Sigmoid colon (tissue), 7 donors: ENCODE measurements at regions of chr12 and their contacts with region 1.

Region 1: DNA sequence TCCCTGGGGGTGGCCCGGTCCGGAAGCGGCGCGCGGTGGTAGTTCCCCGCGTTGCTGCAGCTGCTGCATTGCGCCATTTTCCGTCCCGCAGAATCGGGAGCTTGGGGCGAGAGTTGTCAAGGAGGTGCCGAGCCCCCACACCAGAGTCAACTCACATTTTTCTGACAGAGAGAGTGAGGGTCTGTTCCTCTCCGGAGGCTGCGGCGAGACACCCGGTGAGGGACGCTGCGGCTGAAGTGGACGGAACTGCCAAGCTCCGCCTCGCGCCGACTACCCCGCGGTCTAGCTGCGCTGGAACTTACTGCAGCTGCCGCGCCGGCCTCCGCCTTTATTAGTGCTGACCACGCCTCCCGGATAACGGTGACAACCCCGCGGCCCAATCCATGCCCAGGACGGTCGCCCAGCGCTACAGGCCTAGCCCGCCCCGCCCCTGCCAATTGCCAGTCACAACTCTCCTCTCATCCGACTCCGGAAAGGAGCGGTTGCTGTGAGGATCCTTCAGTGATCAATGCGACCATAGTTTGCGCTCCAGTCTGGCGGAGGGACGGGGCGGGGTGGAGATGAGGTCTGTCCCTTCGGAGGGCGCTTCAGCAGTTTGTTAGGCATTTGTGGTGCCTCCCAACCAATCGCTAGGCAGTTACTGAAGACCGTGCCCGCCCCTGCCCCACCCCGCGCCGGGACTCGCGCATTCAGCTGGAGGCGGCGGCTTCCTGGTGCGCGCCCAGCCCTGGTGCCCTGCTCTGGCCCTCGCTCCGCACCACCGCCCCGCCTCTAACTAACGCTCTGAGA is at the start of gene VAMP1:
- DNase-seq: peak; percentile 99
- H3K4me3 ChIP-seq: peak within 1 kb of the TSS; percentile 63 to 81 (median 71)
- H3K27ac ChIP-seq: peak within 1 kb of the TSS; percentile 89 to 92 (median 90)
- H3K4me1 ChIP-seq: peaks cover 0 to 38% (median 33%) of the 10 kb centered on the region in 4 donors
- H3K27me3 ChIP-seq: no peaks in the 10 kb centered on the region
- CTCF ChIP-seq: peak in 1 of 4 experiments; percentile 18
- EP300 ChIP-seq: no peak
- POLR2A ChIP-seq: peak; percentile 98 to 99
- total RNA-seq, gene VAMP1: 11.5 to 44.0 (median 17.2) TPM

Region 2: DNA sequence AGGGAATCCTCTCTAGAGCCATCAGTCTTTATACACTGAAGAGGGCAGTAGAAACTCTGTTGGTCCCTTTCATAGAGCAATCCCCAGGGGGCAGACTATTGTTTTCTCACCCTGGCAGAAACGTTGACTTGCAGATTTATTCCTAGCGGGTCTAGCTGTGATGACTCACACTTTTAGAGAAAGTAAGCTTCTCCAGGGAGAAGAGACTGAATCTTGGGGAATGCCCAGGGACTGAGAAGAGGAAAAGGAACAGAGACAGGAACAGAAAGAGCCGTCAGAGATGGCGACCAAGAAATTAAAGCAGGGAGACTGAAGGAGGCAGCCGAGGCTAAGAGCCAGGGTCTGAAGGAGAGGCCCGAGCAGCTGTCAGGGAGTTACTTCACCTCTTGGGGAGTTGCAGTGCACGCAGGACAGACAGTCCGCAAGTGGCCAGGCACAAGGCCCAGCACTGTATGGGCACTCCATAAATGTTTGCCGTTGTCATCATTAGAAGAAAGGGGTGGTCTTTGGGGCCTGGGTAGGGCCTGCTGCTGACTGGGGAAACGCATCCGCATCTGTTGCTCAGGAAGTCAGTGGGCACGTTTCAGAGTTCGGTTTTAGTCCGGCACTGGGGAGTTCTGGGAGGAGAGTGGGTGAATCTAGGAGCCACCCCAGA is 147.1 kb before region 1 on chr12:
- intact Hi-C with region 1: loop called (anchors 2 kb)
- DNase-seq: peak; percentile 89
- H3K4me3 ChIP-seq: peak overlapping the region in 2 of 4 donors; percentile 10 to 13
- H3K27ac ChIP-seq: peak overlapping the region; percentile 77 to 98 (median 92)
- H3K4me1 ChIP-seq: peaks cover 0 to 65% (median 56%) of the 10 kb centered on the region in 4 donors
- H3K27me3 ChIP-seq: no peaks in the 10 kb centered on the region
- CTCF ChIP-seq: peak; percentile 41 to 73 (median 48)
- EP300 ChIP-seq: no peak
- POLR2A ChIP-seq: no peak

Region 3: DNA sequence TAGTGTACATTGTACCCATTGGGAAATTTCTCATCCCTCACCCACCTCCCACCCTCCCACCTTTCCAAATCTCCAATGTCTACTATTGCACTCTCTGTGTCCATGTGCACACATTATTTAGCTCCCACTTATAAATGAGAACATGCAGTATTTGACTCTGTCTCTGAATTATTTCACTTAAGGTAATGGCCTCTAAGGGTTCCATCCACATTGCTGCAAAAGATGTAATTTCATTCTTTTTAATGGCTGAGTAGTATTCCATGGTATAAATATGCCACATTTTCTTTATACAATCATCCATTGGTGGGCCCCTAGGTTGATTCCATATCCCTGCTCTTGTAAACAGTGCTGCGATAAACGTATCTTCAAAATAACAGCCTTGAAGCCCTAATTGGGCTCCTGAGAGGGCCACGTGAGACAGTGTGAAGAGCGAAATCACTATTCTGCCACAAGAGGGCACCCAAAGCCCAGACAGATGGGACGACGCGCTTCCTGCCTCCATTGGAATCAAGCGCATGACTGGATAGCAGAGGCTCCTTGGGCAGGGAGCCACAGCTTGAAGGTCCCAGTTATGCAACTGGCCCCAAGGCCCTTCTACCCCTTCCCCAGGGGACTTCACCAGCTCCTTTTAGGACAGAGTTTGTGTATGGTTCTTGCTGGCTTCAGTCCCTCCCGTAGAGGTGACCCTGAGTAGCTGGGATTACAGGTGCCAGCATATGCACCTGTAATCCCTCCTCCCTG is 47.1 kb before region 1 on chr12:
- intact Hi-C with region 1: loop called (anchors 1 kb)
- DNase-seq: peak; percentile 96
- H3K4me3 ChIP-seq: no peak overlapping the region
- H3K27ac ChIP-seq: peak overlapping the region; percentile 43 to 67 (median 62)
- H3K4me1 ChIP-seq: peaks cover 0 to 22% (median 19%) of the 10 kb centered on the region in 4 donors
- H3K27me3 ChIP-seq: no peaks in the 10 kb centered on the region
- CTCF ChIP-seq: peak; percentile 85 to 95 (median 92)
- EP300 ChIP-seq: peak in 1 of 4 donors; percentile 16
- POLR2A ChIP-seq: no peak

Region 4: DNA sequence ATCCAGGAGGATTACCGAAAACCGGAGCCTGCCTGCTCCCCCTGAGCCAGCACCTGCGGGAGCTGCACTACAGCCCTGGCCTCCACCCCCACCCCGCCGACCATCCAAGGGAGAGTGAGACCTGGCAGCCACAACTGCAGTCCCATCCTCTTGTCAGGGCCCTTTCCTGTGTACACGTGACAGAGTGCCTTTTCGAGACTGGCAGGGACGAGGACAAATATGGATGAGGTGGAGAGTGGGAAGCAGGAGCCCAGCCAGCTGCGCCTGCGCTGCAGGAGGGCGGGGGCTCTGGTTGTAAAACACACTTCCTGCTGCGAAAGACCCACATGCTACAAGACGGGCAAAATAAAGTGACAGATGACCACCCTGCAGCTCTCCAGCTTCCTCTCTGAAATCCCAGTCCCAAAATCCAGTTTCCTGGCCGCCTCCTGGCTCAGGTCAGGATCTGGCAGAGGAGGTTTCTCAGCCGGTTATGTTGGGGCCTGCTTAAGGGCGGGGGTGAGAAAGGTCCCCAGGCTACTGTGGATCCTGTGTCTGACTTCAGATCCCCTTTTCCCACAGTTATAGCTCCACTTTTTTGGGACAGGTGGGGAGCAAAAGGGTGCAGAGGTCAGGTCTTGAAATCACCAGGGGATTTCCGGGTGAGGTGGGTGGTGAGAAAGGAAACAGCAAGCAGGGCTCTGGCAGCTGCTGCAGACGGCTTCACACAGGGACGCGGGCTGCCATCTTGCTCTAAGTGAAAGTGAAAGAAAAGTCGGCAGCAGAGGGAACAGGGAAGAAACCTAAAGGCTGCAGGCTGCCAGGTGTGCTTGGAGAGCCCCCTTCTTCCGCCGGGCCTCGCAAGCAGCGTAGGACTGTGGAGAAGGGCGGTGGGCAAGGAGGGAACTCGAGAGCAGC is 19.0 kb before region 1 on chr12 and contains the start of gene TAPBPL:
- intact Hi-C with region 1: loop called (anchors 2 kb)
- DNase-seq: peak; percentile 93
- H3K4me3 ChIP-seq: peak within 1 kb of the TSS; percentile 53 to 80 (median 60)
- H3K27ac ChIP-seq: peak within 1 kb of the TSS; percentile 90 to 98 (median 94)
- H3K4me1 ChIP-seq: peaks cover 0 to 43% (median 37%) of the 10 kb centered on the region in 4 donors
- H3K27me3 ChIP-seq: no peaks in the 10 kb centered on the region
- CTCF ChIP-seq: no peak
- EP300 ChIP-seq: peak in 1 of 4 donors; percentile 9
- POLR2A ChIP-seq: peak; percentile 83 to 84
- total RNA-seq, gene TAPBPL: 20.2 to 27.5 (median 26.9) TPM

Region 5: GRCh38 chr12:6493497-6494257 is 23.1 kb after region 1 on chr12 and contains the start of gene NCAPD2:
- intact Hi-C with region 1: loop called (anchors 1 kb)
- DNase-seq: peak; percentile 98
- H3K4me3 ChIP-seq: peak within 1 kb of the TSS; percentile 60 to 79 (median 70)
- H3K27ac ChIP-seq: peak within 1 kb of the TSS; percentile 94 to 97 (median 96)
- H3K4me1 ChIP-seq: peaks cover 0 to 27% (median 20%) of the 10 kb centered on the region in 4 donors
- H3K27me3 ChIP-seq: no peaks in the 10 kb centered on the region
- CTCF ChIP-seq: peak; percentile 50 to 81 (median 74)
- EP300 ChIP-seq: no peak
- POLR2A ChIP-seq: no peak
- total RNA-seq, gene NCAPD2: 11.8 to 89.5 (median 12.6) TPM

Region 6: GRCh38 chr12:6528887-6529235 is 58.3 kb after region 1 on chr12:
- intact Hi-C with region 1: no loop called
- DNase-seq: no peak
- H3K4me3 ChIP-seq: no peak overlapping the region
- H3K27ac ChIP-seq: no peak overlapping the region
- H3K4me1 ChIP-seq: peaks cover 0 to 22% (median 20%) of the 10 kb centered on the region in 4 donors
- H3K27me3 ChIP-seq: no peaks in the 10 kb centered on the region
- CTCF ChIP-seq: no peak
- EP300 ChIP-seq: no peak
- POLR2A ChIP-seq: no peak

Region 7: GRCh38 chr12:6553051-6553868 is 82.7 kb after region 1 on chr12:
- intact Hi-C with region 1: no loop called
- DNase-seq: peak; percentile 91
- H3K4me3 ChIP-seq: peak overlapping the region in 3 of 4 donors; percentile 84 to 98 (median 95)
- H3K27ac ChIP-seq: peak overlapping the region; percentile 88 to 95 (median 94)
- H3K4me1 ChIP-seq: peaks cover 0 to 78% (median 72%) of the 10 kb centered on the region in 4 donors
- H3K27me3 ChIP-seq: no peaks in the 10 kb centered on the region
- CTCF ChIP-seq: no peak
- EP300 ChIP-seq: peak in 1 of 4 donors; percentile 28
- POLR2A ChIP-seq: peak in 1 of 2 donors; percentile 22